ENCODE measurements at regions of chr2 and their contacts with region 1.

Region 1: DNA sequence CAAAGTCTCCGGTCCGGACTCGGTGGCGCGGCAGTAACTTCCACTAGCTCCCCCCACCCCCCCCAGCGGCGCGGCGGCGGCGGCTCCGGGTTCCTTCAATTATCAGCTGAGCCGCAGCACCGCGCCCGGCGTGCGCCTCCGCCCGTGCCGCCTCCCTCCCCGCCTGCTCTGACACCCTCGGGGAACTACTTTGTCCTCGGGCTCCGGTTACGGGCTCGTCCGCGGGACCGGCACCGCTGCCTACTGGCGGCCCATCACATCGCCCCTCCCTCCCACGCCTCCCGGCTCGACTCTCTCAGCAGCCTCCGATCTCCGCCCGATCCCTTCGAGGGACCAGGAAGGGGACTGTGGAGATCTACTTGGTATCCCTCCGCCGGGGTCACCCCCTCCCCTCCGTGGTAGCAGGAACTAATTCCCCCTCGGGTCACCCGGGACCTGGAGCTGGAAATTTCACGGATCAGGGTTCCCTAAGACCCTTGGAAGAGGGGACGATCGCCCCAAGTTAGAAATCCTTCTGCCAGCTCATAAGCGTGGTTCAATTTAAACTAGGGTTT is at the start of gene TRIP12:
- DNase-seq: peak; percentile 93 to 98 (median 95)
- H3K4me3 ChIP-seq: peak within 1 kb of the TSS; percentile 98 to 99
- H3K4me3 Mint-ChIP-seq: peak within 1 kb of the TSS; percentile 93 to 100 (median 98)
- H3K27ac ChIP-seq: peak within 1 kb of the TSS; percentile 97
- H3K27ac Mint-ChIP-seq: peak within 1 kb of the TSS; percentile 97 to 100 (median 98)
- H3K4me1 ChIP-seq: peaks cover 43% of the 10 kb centered on the region
- H3K4me1 Mint-ChIP-seq: peaks cover 28 to 55% (median 34%) of the 10 kb centered on the region in 4 donors
- H3K27me3 ChIP-seq: no peaks in the 10 kb centered on the region
- H3K27me3 Mint-ChIP-seq: peaks cover 0 to 4% of the 10 kb centered on the region in 2 donors
- total RNA-seq, gene TRIP12: 218 to 224 TPM

Region 2: DNA sequence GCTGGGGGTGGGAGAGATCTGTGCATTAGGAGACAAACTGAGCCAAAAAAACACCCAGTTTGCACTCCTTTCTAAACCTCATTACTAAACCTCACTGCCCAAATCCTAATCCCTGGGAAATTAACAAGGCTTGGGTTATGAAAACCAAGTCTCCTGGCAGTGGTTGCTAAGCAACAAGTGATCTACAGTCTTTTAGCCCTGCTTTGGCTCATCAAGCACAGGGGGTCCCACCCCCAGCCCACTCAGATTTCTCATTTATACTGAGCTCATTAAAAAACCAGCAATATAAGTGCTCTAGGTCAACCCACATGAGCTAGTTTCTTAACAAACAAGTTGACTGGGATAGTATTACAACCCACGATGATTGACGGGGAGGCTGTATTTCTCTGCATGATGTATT is 226.0 kb before region 1 on chr2:
- CTCF ChIA-PET with region 1: no interaction called
- POLR2A ChIA-PET with region 1: no interaction called
- intact Hi-C with region 1: no loop called
- DNase-seq: no peak
- H3K4me3 ChIP-seq: no peak overlapping the region
- H3K4me3 Mint-ChIP-seq: no peak overlapping the region
- H3K27ac ChIP-seq: no peak overlapping the region
- H3K27ac Mint-ChIP-seq: no peak overlapping the region
- H3K4me1 ChIP-seq: no peaks in the 10 kb centered on the region
- H3K4me1 Mint-ChIP-seq: no peaks in the 10 kb centered on the region
- H3K27me3 ChIP-seq: peaks cover 5% of the 10 kb centered on the region
- H3K27me3 Mint-ChIP-seq: peaks cover 14 to 23% of the 10 kb centered on the region in 2 donors

Region 3: DNA sequence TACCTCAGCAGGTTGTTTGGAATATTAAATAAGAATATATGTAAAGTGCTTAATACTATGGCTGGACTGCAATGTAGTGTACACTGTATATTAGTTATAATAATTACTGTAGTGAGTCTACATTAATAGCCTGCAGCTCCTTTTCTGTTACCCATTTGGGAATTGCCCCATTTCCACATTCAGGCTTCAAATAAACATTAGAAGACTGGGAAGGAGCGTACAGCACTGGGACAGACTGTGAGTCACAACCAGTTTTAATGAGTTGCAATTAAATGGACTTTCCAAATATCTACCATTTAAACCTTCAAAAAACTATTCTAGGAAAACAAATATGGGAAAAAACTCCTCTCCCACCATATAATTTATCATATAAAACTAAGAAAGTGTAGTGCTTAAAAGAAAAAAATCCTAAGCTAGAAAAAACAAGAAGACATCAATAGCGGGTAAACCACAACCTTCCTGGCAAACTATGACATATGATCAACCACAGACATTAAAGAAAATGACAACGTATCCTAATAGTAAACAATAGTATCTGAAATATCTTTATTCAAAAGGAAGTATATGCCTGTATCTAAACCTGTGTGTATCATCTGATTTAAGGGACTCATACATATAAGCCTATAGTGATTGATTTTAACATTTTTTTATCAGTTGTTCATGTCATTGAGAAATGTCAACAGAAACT is 86.2 kb before region 1 on chr2:
- CTCF ChIA-PET with region 1: interaction called, 9 read pairs
- POLR2A ChIA-PET with region 1: interaction called, 20 read pairs
- intact Hi-C with region 1: no loop called
- DNase-seq: peak; percentile 51 to 78 (median 68)
- H3K4me3 ChIP-seq: peak overlapping the region in 1 of 2 donors; percentile 25
- H3K4me3 Mint-ChIP-seq: peak overlapping the region; percentile 11 to 82 (median 44)
- H3K27ac ChIP-seq: no peak overlapping the region
- H3K27ac Mint-ChIP-seq: peak overlapping the region; percentile 36 to 96 (median 93)
- H3K4me1 ChIP-seq: peaks cover 71% of the 10 kb centered on the region
- H3K4me1 Mint-ChIP-seq: peaks cover 45 to 76% (median 58%) of the 10 kb centered on the region in 4 donors
- H3K27me3 ChIP-seq: no peaks in the 10 kb centered on the region
- H3K27me3 Mint-ChIP-seq: no peaks in the 10 kb centered on the region

Region 4: GRCh38 chr2:229865033-229865432 is 56.9 kb before region 1 on chr2:
- CTCF ChIA-PET with region 1: no interaction called
- POLR2A ChIA-PET with region 1: interaction called, 11 read pairs
- intact Hi-C with region 1: no loop called
- DNase-seq: no peak
- H3K4me3 ChIP-seq: no peak overlapping the region
- H3K4me3 Mint-ChIP-seq: no peak overlapping the region
- H3K27ac ChIP-seq: no peak overlapping the region
- H3K27ac Mint-ChIP-seq: peak overlapping the region in 4 of 7 donors; percentile 18 to 61 (median 28)
- H3K4me1 ChIP-seq: peaks cover 42% of the 10 kb centered on the region
- H3K4me1 Mint-ChIP-seq: peaks cover 41 to 66% (median 51%) of the 10 kb centered on the region in 4 donors
- H3K27me3 ChIP-seq: no peaks in the 10 kb centered on the region
- H3K27me3 Mint-ChIP-seq: no peaks in the 10 kb centered on the region

Region 5: DNA sequence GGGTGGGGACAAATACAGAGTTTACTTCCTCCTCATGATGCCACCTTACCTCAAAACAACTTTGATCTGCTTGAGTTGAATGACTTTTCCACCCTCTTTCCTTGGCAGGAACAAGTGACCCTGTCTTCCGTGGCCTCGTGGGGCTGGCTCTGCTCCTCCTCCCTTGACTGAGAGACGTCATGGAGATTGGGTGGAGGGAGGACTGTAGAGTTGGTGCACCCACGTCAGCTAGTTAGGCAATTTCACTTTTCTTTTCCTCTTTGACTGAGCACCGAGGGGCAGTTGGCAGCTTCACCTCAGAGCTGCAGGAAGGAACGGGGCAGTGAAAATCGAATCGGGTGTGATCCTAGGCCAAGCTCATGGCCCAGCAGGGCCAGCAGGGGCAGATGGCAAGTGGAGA is 303.5 kb after region 1 on chr2 and contains the start of gene SP140:
- CTCF ChIA-PET with region 1: no interaction called
- POLR2A ChIA-PET with region 1: no interaction called
- intact Hi-C with region 1: loop called (anchors 5 kb)
- DNase-seq: peak; percentile 86 to 97 (median 88)
- H3K4me3 ChIP-seq: peak within 1 kb of the TSS; percentile 39 to 68
- H3K4me3 Mint-ChIP-seq: peak within 1 kb of the TSS; percentile 88 to 97 (median 90)
- H3K27ac ChIP-seq: peak within 1 kb of the TSS; percentile 79
- H3K27ac Mint-ChIP-seq: peak within 1 kb of the TSS; percentile 96 to 99 (median 97)
- H3K4me1 ChIP-seq: peaks cover 60% of the 10 kb centered on the region
- H3K4me1 Mint-ChIP-seq: peaks cover 47 to 77% (median 56%) of the 10 kb centered on the region in 4 donors
- H3K27me3 ChIP-seq: no peaks in the 10 kb centered on the region
- H3K27me3 Mint-ChIP-seq: no peaks in the 10 kb centered on the region
- total RNA-seq, gene SP140: 70.8 to 79.3 TPM

Region 6: GRCh38 chr2:231056453-231057424 is 1134.8 kb after region 1 on chr2 and contains the start of gene PSMD1:
- CTCF ChIA-PET with region 1: no interaction called
- POLR2A ChIA-PET with region 1: no interaction called
- intact Hi-C with region 1: loop called (anchors 5 kb)
- DNase-seq: peak; percentile 95 to 98 (median 96)
- H3K4me3 ChIP-seq: peak within 1 kb of the TSS; percentile 70 to 87
- H3K4me3 Mint-ChIP-seq: peak within 1 kb of the TSS; percentile 98 to 100 (median 99)
- H3K27ac ChIP-seq: peak within 1 kb of the TSS; percentile 85
- H3K27ac Mint-ChIP-seq: peak within 1 kb of the TSS; percentile 99 to 100 (median 100)
- H3K4me1 ChIP-seq: peaks cover 35% of the 10 kb centered on the region
- H3K4me1 Mint-ChIP-seq: peaks cover 31 to 66% (median 49%) of the 10 kb centered on the region in 4 donors
- H3K27me3 ChIP-seq: no peaks in the 10 kb centered on the region
- H3K27me3 Mint-ChIP-seq: peaks cover 0 to 5% of the 10 kb centered on the region in 2 donors
- total RNA-seq, gene PSMD1: 38.0 to 40.8 TPM